Sigmoid colon (tissue), 7 donors: ENCODE measurements at regions of chr12 and their contacts with region 1.

Region 1: DNA sequence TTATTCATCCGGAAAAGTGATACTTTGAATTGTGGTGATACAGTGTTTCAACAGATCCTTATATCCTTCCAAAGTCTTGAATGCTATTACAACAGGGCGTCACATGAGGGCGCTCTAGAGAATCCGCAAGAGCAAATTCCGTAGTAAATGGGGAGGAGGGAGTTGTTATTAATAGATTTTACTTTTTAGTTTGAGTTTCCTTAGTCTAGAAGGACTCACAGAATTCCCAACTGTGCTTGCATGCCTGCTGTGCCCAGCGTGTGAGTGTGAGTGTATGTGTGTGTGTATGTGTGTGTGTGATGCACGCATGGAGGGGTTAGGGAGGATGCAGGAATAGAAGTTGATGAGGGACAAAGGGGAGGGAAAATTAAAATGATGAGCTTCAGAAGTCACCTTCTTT is 375.3 kb downstream of the C12orf75 start:
- DNase-seq: peak; percentile 69
- H3K4me3 ChIP-seq: no peak overlapping the region
- H3K27ac ChIP-seq: no peak overlapping the region
- H3K4me1 ChIP-seq: no peaks in the 10 kb centered on the region
- H3K27me3 ChIP-seq: no peaks in the 10 kb centered on the region
- CTCF ChIP-seq: peak; percentile 24 to 62 (median 50)
- EP300 ChIP-seq: no peak
- POLR2A ChIP-seq: no peak

Region 2: DNA sequence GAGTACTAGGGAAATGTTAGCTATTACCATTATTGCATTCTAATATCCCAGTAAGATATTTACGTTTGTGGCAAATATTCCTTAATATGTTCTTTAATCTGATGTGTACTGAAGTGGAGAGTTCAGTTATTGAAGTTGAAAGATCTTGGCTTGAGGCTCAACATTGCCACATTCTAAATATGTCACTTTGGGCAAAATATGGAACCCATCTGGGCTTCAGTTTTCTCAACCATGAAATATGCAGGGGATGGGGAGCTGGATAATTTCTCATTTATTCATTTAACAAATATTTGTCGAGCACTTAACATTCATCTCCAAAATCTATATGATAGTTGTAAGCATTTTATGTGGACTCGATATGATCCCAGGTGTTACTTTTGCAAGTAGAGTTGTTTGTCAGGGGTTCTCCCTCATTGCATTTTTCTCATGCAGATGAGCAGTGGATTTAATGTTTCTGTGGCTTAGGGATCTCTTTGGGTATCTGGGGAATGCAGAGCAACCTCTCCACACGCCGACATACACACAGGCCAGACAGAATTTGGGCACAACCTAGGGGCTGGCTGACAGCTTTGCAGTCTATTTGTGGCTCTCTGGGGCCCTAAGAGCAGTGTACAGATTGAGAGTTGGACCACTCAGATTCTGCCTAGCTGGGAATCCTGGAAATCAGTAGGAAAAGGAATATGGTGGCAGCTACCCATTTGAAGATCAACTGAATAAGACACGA is 443.1 kb before region 1 on chr12:
- intact Hi-C with region 1: no loop called
- DNase-seq: no peak
- H3K4me3 ChIP-seq: no peak overlapping the region
- H3K27ac ChIP-seq: no peak overlapping the region
- H3K4me1 ChIP-seq: no peaks in the 10 kb centered on the region
- H3K27me3 ChIP-seq: no peaks in the 10 kb centered on the region
- CTCF ChIP-seq: no peak
- EP300 ChIP-seq: no peak
- POLR2A ChIP-seq: no peak

Region 3: DNA sequence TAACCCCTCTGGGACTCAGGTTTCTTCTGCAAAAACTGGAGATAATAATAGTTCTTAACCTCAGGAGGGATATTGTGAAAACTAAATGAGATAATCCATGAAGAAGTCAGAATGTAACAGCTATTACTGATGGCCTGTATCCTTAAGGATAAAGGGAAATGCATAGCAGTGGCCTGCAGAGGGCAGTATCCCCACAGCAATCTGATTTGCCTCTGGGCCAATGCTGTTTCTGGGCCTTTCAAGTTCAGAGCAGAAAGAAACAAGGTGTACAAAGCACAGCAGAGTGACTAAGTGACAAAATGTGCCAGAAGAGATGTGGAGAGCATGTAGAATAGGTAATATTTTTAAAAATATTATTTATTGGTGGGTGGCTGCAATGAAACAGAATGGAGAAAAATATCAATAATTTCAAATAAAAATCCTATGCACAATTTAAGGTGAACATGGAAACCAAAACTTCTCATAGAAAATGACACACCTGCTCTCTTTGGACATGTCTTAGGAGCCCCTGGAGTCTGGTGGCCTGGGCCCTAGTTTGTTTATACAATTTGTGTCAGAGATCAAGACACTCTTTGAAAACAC is 285.0 kb before region 1 on chr12:
- intact Hi-C with region 1: loop called (anchors 2 kb)
- DNase-seq: peak; percentile 83
- H3K4me3 ChIP-seq: no peak overlapping the region
- H3K27ac ChIP-seq: no peak overlapping the region
- H3K4me1 ChIP-seq: peaks cover 0 to 13% (median 6%) of the 10 kb centered on the region in 4 donors
- H3K27me3 ChIP-seq: no peaks in the 10 kb centered on the region
- CTCF ChIP-seq: peak; percentile 85 to 93 (median 88)
- EP300 ChIP-seq: no peak
- POLR2A ChIP-seq: no peak